CD8-positive, alpha-beta T cell (primary cell): ENCODE measurements at regions of chr15 and their contacts with region 1.

Region 1: GRCh38 chr15:38103564-38103963 is 149.1 kb upstream of the SPRED1 start:
- DNase-seq: no peak
- ATAC-seq: no peak
- H3K4me3 ChIP-seq: no peak overlapping the region
- H3K4me3 Mint-ChIP-seq: no peak overlapping the region
- H3K27ac ChIP-seq: no peak overlapping the region
- H3K27ac Mint-ChIP-seq: no peak overlapping the region
- H3K4me1 ChIP-seq: no peaks in the 10 kb centered on the region
- H3K4me1 Mint-ChIP-seq: no peaks in the 10 kb centered on the region
- H3K27me3 ChIP-seq: peaks cover 3% of the 10 kb centered on the region in 2 experiments
- H3K27me3 Mint-ChIP-seq: peaks cover 2% of the 10 kb centered on the region
- CTCF ChIP-seq: no peak

Region 2: GRCh38 chr15:38129531-38130204 is 26.1 kb after region 1 on chr15:
- CTCF ChIA-PET with region 1: no interaction called
- POLR2A ChIA-PET with region 1: no interaction called
- intact Hi-C with region 1: loop called in 1 of 2 experiments (anchors 2 kb)
- DNase-seq: peak in 1 of 9 experiments; percentile 1
- ATAC-seq: no peak
- H3K4me3 ChIP-seq: no peak overlapping the region
- H3K4me3 Mint-ChIP-seq: no peak overlapping the region
- H3K27ac ChIP-seq: no peak overlapping the region
- H3K27ac Mint-ChIP-seq: no peak overlapping the region
- H3K4me1 ChIP-seq: no peaks in the 10 kb centered on the region
- H3K4me1 Mint-ChIP-seq: no peaks in the 10 kb centered on the region
- H3K27me3 ChIP-seq: no peaks in the 10 kb centered on the region
- H3K27me3 Mint-ChIP-seq: peaks cover 16% of the 10 kb centered on the region
- CTCF ChIP-seq: no peak